GM10248 (cell line): ENCODE measurements at regions of chr1 and their contacts with region 1.

Region 1: DNA sequence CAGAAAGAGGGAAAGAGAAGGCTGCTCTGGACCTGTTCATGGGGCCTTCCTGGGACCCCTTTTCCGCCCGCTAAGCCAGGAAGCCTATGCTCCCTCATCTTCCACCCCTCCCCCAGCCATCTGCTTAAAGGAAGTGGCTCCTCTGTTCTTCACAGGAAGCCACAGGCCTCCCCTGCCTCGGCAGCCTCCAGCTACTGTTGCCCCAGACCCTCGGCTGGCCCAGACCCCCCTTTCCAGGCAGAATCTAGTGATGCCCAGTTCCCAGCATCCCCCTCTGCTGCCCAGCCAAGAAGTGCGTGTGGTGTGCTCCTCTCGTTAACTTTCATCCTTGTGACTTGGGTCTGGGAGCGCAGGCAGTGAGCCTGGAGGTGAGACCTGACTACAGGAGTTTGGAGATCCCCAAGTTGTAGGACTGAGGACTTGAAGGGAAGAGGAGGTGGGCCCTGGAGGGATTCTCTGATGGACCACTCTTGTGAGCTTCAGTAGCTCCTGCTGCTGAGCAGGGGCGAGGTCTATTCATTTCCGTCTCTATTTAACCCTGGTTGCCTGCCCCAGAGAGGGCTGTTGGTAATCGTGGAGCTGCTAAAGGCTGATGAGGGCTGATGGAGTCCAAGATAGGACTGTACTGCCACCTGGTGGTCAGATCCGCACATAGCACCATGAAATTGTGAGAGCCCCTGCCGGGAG is 9.1 kb downstream of the IFI6 start:
- DNase-seq: peak; percentile 76
- CTCF ChIP-seq: peak; percentile 82

Region 2: GRCh38 chr1:27416387-27417111 is 246.3 kb before region 1 on chr1:
- CTCF ChIA-PET with region 1: interaction called, 15 read pairs
- POLR2A ChIA-PET with region 1: no interaction called
- DNase-seq: no peak
- CTCF ChIP-seq: peak; percentile 64

Region 3: DNA sequence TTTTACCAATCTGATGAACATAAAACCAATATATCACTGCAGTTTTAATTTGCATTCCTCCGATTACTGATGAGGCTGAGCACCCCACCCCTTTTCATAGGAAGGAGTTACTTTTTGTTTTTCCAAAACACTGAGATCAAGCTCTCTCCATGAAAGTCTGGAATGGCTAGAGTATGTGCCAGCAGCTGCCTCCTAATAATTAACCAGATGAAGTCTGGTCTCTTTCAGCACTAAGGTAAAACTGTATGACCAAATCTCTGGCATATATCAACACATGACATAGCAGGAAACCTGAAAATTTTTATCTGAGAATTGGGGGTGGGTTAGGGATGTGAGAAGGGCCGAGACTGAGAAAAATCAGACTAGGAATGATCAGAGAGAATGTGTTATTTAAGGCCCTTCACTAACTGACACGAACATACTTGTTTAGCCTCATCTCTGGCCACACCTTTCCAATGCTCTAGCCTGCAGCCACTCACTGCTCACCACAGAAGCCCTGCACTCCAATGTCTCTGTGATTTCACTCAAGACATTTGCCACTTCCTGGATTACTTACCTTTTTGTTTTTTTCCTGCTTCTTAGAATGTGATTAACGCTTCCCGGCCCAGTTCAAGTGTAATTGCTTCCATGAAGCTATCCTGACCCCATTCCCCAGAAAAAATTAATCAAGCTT is 207.6 kb before region 1 on chr1:
- CTCF ChIA-PET with region 1: no interaction called
- POLR2A ChIA-PET with region 1: no interaction called
- DNase-seq: no peak
- CTCF ChIP-seq: no peak

Region 4: GRCh38 chr1:27568300-27569087 is 94.4 kb before region 1 on chr1:
- CTCF ChIA-PET with region 1: interaction called, 25 read pairs
- POLR2A ChIA-PET with region 1: no interaction called
- DNase-seq: peak; percentile 98
- CTCF ChIP-seq: peak; percentile 64

Region 5: DNA sequence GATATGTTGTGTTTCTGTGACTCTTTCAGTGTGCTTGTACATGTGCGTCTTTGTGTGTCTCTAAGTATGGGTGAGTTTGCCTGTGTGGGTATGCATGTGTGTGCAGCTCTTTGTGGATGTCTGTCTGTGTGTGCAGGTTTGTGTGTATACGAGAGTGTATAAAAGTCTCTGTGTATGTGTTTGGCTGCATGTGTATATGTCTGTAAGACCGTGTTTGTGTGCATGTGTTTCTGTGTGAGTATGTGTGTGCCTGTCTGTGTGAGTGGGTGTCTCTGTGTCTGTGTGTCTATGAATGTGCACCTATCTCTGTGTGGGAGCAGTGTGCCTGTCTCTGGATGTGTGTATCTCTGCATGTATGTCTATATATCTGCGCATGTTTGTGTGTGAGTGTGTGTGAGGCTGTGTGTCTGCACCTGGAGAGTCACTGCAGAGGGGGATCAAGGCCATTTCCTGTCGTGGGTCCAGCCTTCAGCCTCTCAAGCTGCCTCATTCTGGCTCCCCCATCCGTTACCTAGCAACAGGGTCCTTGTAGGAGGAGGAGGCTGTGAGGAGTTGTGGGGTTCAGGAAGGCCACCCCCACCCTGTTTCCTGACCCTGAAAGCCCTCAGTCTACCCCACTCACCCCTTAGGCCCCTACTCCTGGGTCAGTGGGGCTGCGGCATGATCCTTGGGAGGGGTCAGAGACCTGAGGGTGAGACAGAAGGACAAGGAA is 38.2 kb before region 1 on chr1:
- CTCF ChIA-PET with region 1: interaction called, 72 read pairs
- POLR2A ChIA-PET with region 1: interaction called, 6 read pairs
- DNase-seq: peak; percentile 59
- CTCF ChIP-seq: no peak

Region 6: DNA sequence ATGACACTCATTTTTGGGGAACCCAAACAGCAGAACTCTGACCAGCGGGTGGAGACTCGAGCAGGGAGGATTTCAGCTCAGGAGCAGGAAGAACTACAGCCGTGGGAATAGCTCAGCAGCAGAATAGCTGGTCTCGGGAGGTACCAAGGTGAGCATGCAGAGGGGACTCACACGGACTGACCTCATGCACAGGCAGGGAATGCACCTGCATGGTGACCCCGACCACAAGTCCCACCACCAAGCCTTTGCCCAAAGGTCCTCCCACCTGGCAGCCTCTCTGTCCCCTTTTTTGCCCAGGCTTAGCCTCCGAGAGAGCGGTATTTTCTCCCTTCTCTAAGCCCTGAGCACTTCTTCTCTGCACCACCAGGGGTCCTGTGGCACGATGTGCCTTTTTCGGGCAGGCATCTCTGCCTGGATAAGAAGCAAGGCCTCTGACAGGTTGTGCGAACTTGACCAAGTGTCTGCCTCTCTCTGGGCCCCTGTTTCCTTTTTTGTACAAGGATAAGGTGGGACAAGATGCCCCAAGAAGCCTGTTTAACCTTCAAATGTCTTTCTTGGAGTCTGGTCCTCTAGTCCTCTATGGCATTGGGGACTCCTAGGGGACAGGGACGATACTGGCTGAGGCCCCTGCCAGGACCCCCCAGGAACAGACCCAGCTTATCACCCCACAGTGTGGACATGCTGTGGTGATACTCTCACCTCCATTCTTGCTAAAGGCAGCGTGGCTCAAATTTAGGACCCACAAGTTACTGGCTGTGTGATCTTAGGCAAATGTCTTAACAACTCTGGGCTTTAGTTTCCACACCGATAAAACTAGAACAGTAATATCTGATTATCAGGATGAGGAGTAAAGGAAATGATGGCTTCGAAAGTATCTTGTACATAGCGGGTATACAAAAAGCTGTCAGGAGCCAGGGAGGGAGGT is 18.9 kb before region 1 on chr1:
- CTCF ChIA-PET with region 1: interaction called, 20 read pairs
- POLR2A ChIA-PET with region 1: no interaction called
- DNase-seq: peak; percentile 72
- CTCF ChIP-seq: peak; percentile 80

Region 7: GRCh38 chr1:27713139-27713725 is 50.4 kb after region 1 on chr1:
- CTCF ChIA-PET with region 1: no interaction called
- POLR2A ChIA-PET with region 1: no interaction called
- DNase-seq: no peak
- CTCF ChIP-seq: no peak